ENCODE measurements at regions of chr17 and their contacts with region 1.

Region 1: DNA sequence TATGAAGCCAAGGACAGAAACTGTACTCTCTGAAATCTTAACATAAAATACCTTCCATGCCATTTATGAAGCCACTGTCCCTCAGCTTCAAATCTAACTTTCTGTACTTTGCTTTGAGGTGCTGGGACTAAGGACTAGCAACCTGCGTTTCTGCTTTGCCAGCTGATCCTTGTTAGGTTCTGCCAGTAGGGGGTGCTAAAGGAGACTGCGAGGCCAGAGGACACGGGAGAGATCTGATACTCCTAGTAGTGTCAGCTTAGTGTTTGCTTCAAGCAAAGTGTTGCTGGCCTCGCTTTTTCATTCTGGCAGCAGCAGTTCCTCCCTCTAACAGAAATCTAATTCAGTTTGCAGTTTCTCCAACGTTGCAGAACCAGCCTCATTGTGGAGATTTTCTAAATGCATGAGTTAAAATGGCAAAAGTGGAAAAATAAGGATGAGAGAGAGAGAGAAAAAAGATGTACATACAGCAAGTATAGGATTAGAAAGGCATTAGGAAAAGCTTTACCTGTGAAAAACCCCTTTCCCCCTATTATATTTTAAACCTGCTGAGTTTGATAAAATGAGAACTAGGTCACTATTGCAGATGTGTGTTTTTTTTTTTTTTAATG is 297.5 kb downstream of the CA10 start:
- DNase-seq: peak; percentile 36
- H3K4me3 Mint-ChIP-seq: no peak overlapping the region
- H3K27ac Mint-ChIP-seq: no peak overlapping the region
- H3K4me1 Mint-ChIP-seq: no peaks in the 10 kb centered on the region
- H3K27me3 Mint-ChIP-seq: peaks cover 7% of the 10 kb centered on the region

Region 2: GRCh38 chr17:51914577-51914976 is 53.5 kb after region 1 on chr17:
- CTCF ChIA-PET with region 1: no interaction called
- POLR2A ChIA-PET with region 1: no interaction called
- intact Hi-C with region 1: no loop called
- DNase-seq: no peak
- H3K4me3 Mint-ChIP-seq: no peak overlapping the region
- H3K27ac Mint-ChIP-seq: no peak overlapping the region
- H3K4me1 Mint-ChIP-seq: no peaks in the 10 kb centered on the region
- H3K27me3 Mint-ChIP-seq: no peaks in the 10 kb centered on the region

Region 3: GRCh38 chr17:52106638-52107261 is 245.7 kb after region 1 on chr17:
- CTCF ChIA-PET with region 1: no interaction called
- POLR2A ChIA-PET with region 1: no interaction called
- intact Hi-C with region 1: loop called (anchors 5 kb)
- DNase-seq: peak; percentile 46
- H3K4me3 Mint-ChIP-seq: no peak overlapping the region
- H3K27ac Mint-ChIP-seq: no peak overlapping the region
- H3K4me1 Mint-ChIP-seq: no peaks in the 10 kb centered on the region
- H3K27me3 Mint-ChIP-seq: peaks cover 10% of the 10 kb centered on the region

Measured in activated CD4-positive, alpha-beta memory T cell treated with anti-CD3 and anti-CD28 coated beads for 36 hours (primary cell).